ENCODE measurements at regions of chr11 and their contacts with region 1.

Region 1: GRCh38 chr11:65779851-65780577 is 762 bp downstream of the AP5B1 start:
- DNase-seq: peak; percentile 88
- H3K4me3 Mint-ChIP-seq: peak overlapping the region; percentile 86
- H3K27ac Mint-ChIP-seq: peak overlapping the region; percentile 36
- H3K4me1 Mint-ChIP-seq: peaks cover 10% of the 10 kb centered on the region
- H3K27me3 Mint-ChIP-seq: no peaks in the 10 kb centered on the region

Region 2: GRCh38 chr11:65711785-65712632 is 68.0 kb before region 1 on chr11 and contains the start of gene KAT5:
- CTCF ChIA-PET with region 1: interaction called, 19 read pairs
- intact Hi-C with region 1: loop called (anchors 1 kb)
- DNase-seq: peak; percentile 100
- H3K4me3 Mint-ChIP-seq: peak within 1 kb of the TSS; percentile 95
- H3K27ac Mint-ChIP-seq: peak within 1 kb of the TSS; percentile 97
- H3K4me1 Mint-ChIP-seq: peaks cover 33% of the 10 kb centered on the region
- H3K27me3 Mint-ChIP-seq: no peaks in the 10 kb centered on the region
- total RNA-seq, gene KAT5: 60.1 to 67.1 TPM

Region 3: GRCh38 chr11:65766535-65766934 is 13.5 kb before region 1 on chr11:
- CTCF ChIA-PET with region 1: interaction called, 29 read pairs
- intact Hi-C with region 1: no loop called
- DNase-seq: no peak
- H3K4me3 Mint-ChIP-seq: no peak overlapping the region
- H3K27ac Mint-ChIP-seq: no peak overlapping the region
- H3K4me1 Mint-ChIP-seq: peaks cover 4% of the 10 kb centered on the region
- H3K27me3 Mint-ChIP-seq: no peaks in the 10 kb centered on the region

Region 4: GRCh38 chr11:65796726-65797601 is 16.9 kb after region 1 on chr11:
- CTCF ChIA-PET with region 1: interaction called, 33 read pairs
- intact Hi-C with region 1: no loop called
- DNase-seq: no peak
- H3K4me3 Mint-ChIP-seq: no peak overlapping the region
- H3K27ac Mint-ChIP-seq: no peak overlapping the region
- H3K4me1 Mint-ChIP-seq: no peaks in the 10 kb centered on the region
- H3K27me3 Mint-ChIP-seq: no peaks in the 10 kb centered on the region

Region 5: GRCh38 chr11:65810046-65810868 is 30.2 kb after region 1 on chr11:
- CTCF ChIA-PET with region 1: interaction called, 158 read pairs
- intact Hi-C with region 1: no loop called
- DNase-seq: no peak
- H3K4me3 Mint-ChIP-seq: no peak overlapping the region
- H3K27ac Mint-ChIP-seq: no peak overlapping the region
- H3K4me1 Mint-ChIP-seq: no peaks in the 10 kb centered on the region
- H3K27me3 Mint-ChIP-seq: no peaks in the 10 kb centered on the region

Region 6: DNA sequence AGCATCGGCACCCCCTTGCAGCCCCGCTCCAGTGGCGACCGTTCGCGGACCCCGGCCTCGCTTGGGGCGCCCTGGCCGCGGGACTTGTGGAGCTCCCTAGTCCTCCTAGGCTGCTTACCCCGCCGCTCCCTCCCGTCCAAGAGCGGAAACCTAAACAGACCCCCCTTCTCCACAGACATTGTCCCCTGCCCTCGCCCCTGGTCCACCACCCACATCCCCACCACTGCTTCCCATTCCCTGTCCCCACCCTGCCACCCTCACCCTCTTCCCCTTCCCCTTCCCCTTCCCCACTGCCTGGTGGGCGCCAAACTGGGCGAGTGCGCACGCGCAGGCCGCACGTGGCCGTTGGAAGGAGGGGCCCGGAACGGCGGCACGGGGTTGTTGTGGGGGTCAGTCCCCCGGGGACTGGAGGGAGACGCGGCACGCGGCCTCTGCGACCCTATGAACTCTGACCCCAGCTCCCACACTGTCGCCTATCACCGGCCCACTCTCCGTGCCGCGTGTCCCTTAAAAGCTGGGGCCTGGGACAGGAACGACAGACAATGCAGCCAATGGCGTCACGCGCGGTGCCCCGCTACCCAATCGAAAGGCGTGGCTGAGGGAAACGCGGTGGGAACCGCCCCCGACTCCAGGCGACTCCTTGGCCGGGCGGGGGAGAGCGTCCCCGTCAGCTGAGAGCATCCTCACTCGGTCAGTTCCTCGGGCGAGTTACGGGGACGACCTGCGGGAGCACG is 53.5 kb after region 1 on chr11 and contains the start of gene SNX32:
- CTCF ChIA-PET with region 1: interaction called, 16 read pairs
- intact Hi-C with region 1: no loop called
- DNase-seq: peak; percentile 97
- H3K4me3 Mint-ChIP-seq: no peak within 1 kb of the TSS
- H3K27ac Mint-ChIP-seq: no peak within 1 kb of the TSS
- H3K4me1 Mint-ChIP-seq: peaks cover 22% of the 10 kb centered on the region
- H3K27me3 Mint-ChIP-seq: no peaks in the 10 kb centered on the region
- total RNA-seq, gene SNX32: 1.5 to 2.0 TPM

Region 7: GRCh38 chr11:65988791-65989592 is 209.0 kb after region 1 on chr11:
- CTCF ChIA-PET with region 1: interaction called, 12 read pairs
- intact Hi-C with region 1: loop called (anchors 1 kb)
- DNase-seq: peak; percentile 98
- H3K4me3 Mint-ChIP-seq: no peak overlapping the region
- H3K27ac Mint-ChIP-seq: peak overlapping the region; percentile 70
- H3K4me1 Mint-ChIP-seq: peaks cover 4% of the 10 kb centered on the region
- H3K27me3 Mint-ChIP-seq: no peaks in the 10 kb centered on the region